ENCODE measurements at regions of chr19 and their contacts with region 1.

Region 1: GRCh38 chr19:38618590-38619360 is at the start of gene EIF3K:
- DNase-seq: peak; percentile 99

Region 2: GRCh38 chr19:38496603-38497487 is 121.9 kb before region 1 on chr19:
- CTCF ChIA-PET with region 1: no interaction called
- POLR2A ChIA-PET with region 1: no interaction called
- DNase-seq: no peak

Region 3: GRCh38 chr19:38569368-38569983 is 49.3 kb before region 1 on chr19:
- CTCF ChIA-PET with region 1: no interaction called
- POLR2A ChIA-PET with region 1: interaction called, 11 read pairs
- DNase-seq: no peak

Region 4: GRCh38 chr19:38606131-38606530 is 12.6 kb before region 1 on chr19:
- CTCF ChIA-PET with region 1: interaction called, 4 read pairs
- POLR2A ChIA-PET with region 1: interaction called, 18 read pairs
- DNase-seq: no peak

Region 5: DNA sequence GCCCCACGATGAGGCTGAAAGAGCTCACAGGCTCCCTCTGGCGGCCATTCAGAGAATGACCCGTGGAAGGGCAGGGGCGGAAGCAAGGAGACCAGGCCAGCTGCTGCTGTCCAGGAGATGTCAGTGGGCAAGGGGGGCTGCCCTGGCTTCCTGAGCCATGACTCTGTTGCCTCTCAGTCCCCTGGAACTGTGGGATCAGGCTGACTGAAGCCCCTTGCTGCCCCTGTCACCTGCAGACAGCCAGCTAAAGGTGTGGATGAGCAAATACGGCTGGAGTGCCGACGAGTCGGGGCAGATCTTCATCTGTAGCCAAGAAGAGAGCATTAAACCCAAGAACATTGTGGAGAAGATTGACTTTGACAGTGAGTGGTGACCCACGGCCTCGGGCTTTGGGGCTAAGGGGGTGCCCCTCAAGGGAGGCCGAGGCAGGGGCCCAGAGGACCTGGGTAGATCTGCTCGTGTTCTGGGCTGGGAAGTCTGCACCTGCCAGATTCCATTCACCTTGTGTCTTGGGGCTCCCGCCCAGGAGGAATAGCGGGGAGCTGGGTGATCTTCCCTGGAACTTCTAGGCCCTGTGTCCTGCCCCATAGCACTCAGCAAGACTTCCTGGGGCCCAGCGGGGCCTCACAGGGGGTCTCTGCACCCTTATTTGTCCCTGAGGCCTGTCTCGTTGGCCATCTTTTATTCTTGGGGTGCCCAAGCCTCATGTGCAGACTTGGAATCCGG is 16.1 kb after region 1 on chr19:
- CTCF ChIA-PET with region 1: interaction called, 4 read pairs
- POLR2A ChIA-PET with region 1: interaction called, 10 read pairs
- DNase-seq: peak; percentile 78

Region 6: GRCh38 chr19:38647368-38647965 is 28.7 kb after region 1 on chr19 and contains the start of gene ACTN4:
- CTCF ChIA-PET with region 1: no interaction called
- POLR2A ChIA-PET with region 1: interaction called, 39 read pairs
- DNase-seq: peak; percentile 98

Measured in HEK293T (cell line).